Heart left ventricle (tissue), 16 donors: ENCODE measurements at regions of chr5 and their contacts with region 1.

Region 1: GRCh38 chr5:136174021-136174659 is 18.8 kb downstream of the SMIM32 start:
- DNase-seq: no peak
- ATAC-seq: peak in 2 of 4 donors; percentile 73 to 75
- H3K4me3 ChIP-seq: no peak overlapping the region
- H3K27ac ChIP-seq: no peak overlapping the region
- H3K4me1 ChIP-seq: peaks cover 0 to 3% (median 0%) of the 10 kb centered on the region in 12 donors
- H3K27me3 ChIP-seq: no peaks in the 10 kb centered on the region
- CTCF ChIP-seq: peak; percentile 43 to 76 (median 64)
- POLR2A ChIP-seq: no peak

Region 2: DNA sequence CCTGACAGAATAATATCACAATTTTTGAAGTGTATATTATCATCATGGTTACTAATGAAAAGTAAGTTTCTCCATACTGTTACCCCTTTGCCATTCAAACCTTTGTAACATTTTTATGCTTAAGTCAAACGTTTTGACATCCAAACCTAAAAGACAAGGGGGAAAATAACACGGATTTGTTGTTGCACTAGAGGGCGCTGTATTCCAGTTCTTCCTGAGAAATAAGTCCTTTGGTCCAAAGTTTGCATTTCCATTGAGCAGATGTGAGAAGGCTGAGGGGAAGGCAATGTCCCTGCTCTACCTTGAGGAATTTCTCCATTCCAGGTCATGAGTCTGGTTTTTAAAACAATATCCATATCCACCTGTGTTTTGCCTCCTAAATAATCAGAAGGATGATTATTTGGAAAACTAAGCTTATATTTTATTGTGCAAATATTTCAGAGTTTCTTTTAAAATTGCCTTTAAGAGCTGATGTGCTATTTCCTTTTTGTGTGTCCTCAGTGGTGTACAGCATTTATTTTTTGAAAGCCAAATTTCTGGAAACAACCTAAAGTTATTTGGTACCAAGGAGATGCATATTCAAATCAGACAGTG is 229.1 kb before region 1 on chr5:
- intact Hi-C with region 1: loop called in 7 of 10 experiments (anchors 2 to 10 kb)
- DNase-seq: peak in 4 of 5 donors; percentile 28 to 56 (median 41)
- ATAC-seq: peak in 3 of 4 donors; percentile 46 to 59 (median 58)
- H3K4me3 ChIP-seq: no peak overlapping the region
- H3K27ac ChIP-seq: no peak overlapping the region
- H3K4me1 ChIP-seq: no peaks in the 10 kb centered on the region
- H3K27me3 ChIP-seq: peaks cover 0 to 11% (median 0%) of the 10 kb centered on the region in 9 donors
- CTCF ChIP-seq: peak; percentile 61 to 87 (median 80)
- POLR2A ChIP-seq: no peak

Region 3: GRCh38 chr5:136062366-136063274 is 111.5 kb before region 1 on chr5:
- intact Hi-C with region 1: loop called in 9 of 10 experiments (anchors 1 to 10 kb)
- DNase-seq: peak in 1 of 5 donors; percentile 18
- ATAC-seq: peak in 1 of 4 donors; percentile 29
- H3K4me3 ChIP-seq: no peak overlapping the region
- H3K27ac ChIP-seq: no peak overlapping the region
- H3K4me1 ChIP-seq: peaks cover 0 to 42% (median 13%) of the 10 kb centered on the region in 12 donors
- H3K27me3 ChIP-seq: no peaks in the 10 kb centered on the region
- CTCF ChIP-seq: peak in 11 of 12 donors; percentile 37 to 60 (median 49)
- POLR2A ChIP-seq: no peak

Region 4: DNA sequence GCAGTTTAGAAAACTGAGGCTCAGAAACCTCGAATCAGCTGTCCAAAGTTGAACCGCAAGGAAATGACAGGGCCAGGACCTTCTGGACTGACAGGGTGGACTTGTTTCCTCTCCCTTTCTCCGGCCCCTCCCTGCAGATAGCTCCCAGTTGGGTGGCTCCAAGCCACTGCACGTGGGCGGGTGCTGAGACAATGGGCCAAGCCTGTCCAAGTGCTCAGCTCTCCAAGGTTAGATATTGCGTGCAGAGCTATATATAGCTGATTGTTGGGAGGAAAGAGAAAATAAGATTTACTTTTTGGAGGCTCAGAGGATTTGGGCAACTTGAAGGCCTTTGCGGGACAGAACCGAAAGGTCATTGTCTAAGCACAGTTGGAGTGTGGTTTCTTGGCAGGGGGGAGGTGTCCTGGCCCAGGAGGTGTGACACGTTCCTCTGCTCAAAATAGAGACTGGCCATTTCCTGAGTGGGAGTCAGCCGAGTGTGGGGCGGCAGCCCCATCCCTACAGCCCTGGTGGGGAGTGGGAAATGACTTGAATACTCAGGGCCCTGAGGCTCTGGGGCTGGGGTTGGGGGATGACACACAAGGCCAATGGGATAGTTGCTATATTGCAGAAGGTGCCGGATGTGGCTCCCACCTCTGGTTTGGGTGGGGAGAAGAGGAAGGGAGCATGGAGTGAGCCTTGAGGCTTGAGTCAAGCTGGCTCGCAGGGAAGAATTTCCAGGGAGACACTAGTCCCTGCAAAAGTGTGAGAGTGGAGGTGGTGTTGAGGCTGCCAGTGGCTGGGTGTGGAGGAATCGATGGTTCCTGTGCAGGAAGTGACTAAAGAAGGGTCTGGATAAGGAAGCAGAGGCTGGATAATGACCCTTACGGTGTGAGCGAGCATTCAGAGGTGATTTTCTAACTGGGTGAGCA is 85.9 kb before region 1 on chr5:
- intact Hi-C with region 1: loop called in 7 of 10 experiments (anchors 2 to 10 kb)
- DNase-seq: peak; percentile 90 to 94 (median 92)
- ATAC-seq: peak; percentile 97 to 99 (median 98)
- H3K4me3 ChIP-seq: peak overlapping the region in 3 of 12 donors; percentile 4 to 23 (median 17)
- H3K27ac ChIP-seq: peak overlapping the region; percentile 68 to 94 (median 88)
- H3K4me1 ChIP-seq: peaks cover 6 to 62% (median 32%) of the 10 kb centered on the region in 12 donors
- H3K27me3 ChIP-seq: no peaks in the 10 kb centered on the region
- CTCF ChIP-seq: no peak
- POLR2A ChIP-seq: no peak